OCI-LY7 (cell line): ENCODE measurements at regions of chr1 and their contacts with region 1.

Region 1: DNA sequence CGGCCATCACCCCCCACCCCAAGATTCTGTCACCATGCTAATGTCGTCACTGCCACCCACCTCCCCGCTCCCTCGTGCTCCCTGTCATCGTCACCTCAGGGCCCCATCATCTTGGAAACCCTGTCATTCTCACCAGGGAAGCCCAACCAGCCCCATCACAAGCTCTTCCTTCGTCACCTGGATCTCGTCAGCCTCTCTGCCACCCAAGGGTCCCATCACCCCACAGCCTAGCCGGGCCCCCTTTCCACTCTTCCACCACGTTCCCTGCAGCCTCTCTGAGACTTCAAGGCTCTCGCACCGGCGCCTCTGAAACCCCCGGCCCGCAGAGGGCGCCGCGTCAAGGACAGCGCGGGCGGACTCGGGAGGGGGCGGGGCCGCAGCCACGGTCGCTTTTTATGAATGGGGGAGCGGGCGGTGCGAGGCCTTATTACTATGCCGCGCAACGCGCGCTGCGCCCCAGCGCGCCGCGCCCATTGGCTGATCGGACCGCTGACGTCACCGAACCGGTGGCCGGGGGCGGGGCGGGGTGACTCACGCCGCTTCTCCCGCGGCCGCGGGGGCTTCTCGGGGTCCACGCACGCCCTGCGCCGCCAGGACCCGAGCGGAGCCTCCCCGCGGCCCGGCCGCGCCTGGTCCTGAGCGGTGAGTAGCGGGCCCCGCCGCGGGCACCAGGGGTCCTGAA is at the start of gene GPR3:
- DNase-seq: peak; percentile 96
- H3K4me3 ChIP-seq: peak within 1 kb of the TSS; percentile 75
- H3K27ac ChIP-seq: no peak within 1 kb of the TSS
- H3K4me1 ChIP-seq: peaks cover 13% of the 10 kb centered on the region
- CTCF ChIP-seq: peak; percentile 74
- total RNA-seq, gene GPR3: 0.21 and 0.32 TPM in 2 replicates

Region 2: DNA sequence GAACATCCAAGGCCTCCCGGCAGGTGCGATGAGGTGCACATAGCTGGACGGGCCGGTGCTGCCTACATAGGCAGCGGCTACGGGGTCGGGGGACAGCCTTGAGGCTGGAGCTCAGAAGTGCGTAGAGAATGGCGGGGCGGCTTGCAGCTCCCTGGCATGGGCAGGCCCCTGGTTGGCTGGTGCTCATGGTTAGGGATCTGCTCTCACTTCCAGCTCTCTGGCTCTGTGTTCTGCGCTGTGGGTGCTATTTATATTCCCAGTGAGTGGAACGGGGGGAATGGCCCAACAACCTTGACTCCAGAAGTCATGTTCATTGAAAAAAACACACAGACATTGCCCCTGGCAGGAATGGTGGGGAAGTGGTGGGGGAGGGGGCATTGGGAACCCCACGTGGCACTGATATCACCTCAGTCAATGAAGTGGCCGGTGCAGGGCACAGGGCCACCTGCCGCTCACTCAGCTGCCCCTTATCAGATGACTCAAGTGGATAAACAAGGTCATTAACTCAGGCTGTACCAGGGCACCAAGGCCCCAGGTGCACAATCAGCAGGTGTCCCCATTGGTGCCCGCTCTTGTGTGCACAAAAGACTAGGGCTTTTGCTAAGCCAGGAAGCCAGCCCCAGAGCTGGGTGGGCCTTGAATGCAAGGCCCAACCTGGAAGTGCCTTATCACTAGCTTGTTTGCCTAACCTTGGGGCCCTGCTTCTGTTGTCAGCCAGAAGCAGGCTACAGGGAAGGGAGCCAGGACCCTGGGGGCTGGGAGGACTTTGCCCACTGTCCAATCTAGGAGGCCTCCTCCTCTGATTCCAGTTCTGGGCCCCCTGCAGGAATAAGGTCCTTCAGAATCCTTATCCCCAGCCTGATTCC is 478.2 kb before region 1 on chr1 and contains the start of gene NR0B2:
- CTCF ChIA-PET with region 1: no interaction called
- POLR2A ChIA-PET with region 1: no interaction called
- intact Hi-C with region 1: no loop called
- DNase-seq: peak; percentile 47
- H3K4me3 ChIP-seq: no peak within 1 kb of the TSS
- H3K27ac ChIP-seq: no peak within 1 kb of the TSS
- H3K4me1 ChIP-seq: peaks cover 7% of the 10 kb centered on the region
- CTCF ChIP-seq: no peak
- total RNA-seq, gene NR0B2: not detected in 2 replicates

Region 3: DNA sequence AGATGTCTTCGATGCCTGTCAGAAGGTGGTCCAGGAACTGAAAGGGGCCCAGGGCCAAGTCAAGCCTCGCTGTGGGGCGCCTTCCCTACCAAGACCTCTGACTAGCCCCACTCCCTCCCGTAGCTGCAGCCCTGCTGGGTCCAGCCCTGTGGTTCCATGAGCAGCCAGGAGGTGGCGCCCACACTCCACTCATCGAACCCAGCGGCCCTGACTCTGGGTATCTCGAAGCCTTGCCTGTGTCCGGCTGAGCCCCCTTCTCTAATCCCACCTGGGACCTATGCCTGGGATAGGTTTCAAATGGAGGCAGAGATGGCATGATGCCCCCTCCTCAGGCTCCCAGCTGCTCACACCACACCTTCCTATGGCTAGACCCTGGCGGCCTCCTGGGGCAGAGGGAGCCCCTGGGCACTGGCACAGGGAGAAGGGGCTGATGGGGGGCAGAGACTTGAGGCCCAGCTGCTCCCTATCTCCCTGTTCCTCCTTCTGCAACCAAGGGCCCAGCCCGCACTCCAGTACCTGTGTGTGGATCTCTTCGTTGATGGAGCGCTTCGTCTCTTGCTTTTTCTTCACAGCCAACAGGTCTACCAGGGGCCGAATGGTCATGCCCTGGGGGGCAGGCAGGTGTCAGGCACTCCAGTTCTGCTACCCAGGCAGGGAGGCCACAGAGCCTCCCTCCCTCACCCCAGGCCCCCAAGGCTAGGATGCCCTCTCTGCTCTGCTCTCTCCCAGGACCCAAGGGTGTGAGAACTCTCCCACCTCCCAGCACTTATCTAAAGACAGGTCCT is 289.3 kb before region 1 on chr1:
- CTCF ChIA-PET with region 1: no interaction called
- POLR2A ChIA-PET with region 1: no interaction called
- intact Hi-C with region 1: loop called (anchors 5 kb)
- DNase-seq: peak; percentile 70
- H3K4me3 ChIP-seq: no peak overlapping the region
- H3K27ac ChIP-seq: no peak overlapping the region
- H3K4me1 ChIP-seq: peaks cover 24% of the 10 kb centered on the region
- CTCF ChIP-seq: peak; percentile 92

Region 4: GRCh38 chr1:27300341-27301051 is 91.7 kb before region 1 on chr1:
- CTCF ChIA-PET with region 1: no interaction called
- POLR2A ChIA-PET with region 1: no interaction called
- intact Hi-C with region 1: loop called (anchors 1 kb)
- DNase-seq: peak; percentile 80
- H3K4me3 ChIP-seq: no peak overlapping the region
- H3K27ac ChIP-seq: no peak overlapping the region
- H3K4me1 ChIP-seq: peaks cover 9% of the 10 kb centered on the region
- CTCF ChIP-seq: peak; percentile 90

Region 5: DNA sequence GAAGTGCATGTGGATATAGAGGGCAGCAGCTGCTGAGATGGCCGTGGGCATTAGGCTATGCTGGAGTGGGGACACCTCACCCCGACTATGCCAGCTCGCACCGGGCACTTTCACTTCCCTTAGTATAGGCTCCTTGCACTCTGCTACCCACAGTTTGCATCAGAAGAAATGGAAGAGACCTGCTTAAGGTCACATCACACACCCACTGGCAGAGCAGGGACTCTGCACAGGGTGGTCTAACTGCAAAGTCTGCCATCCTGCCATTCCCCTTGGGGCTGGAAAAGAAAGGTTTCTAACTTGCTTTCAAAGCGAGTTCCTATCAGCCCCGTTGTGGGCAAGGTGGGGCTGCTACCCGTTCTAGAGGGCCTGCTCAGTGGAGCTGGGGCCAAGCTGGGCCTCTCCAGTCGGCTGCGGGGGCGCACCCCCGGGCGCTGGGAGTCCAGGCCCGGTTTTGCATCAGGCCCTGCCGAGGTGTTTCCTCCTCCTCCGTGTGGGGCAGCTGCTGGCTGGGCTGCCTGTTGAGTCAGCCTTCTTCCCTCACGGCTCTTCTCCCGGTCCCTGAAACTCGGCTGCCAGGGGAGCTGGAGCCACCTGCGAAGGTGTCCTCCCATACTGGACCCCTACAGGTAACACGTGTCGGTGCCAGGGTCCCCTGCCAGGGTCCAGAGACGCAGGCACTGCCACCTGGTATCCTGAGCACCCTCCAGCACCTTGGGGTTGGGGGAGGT is 50.5 kb before region 1 on chr1 and contains the start of gene SYTL1:
- CTCF ChIA-PET with region 1: no interaction called
- POLR2A ChIA-PET with region 1: no interaction called
- intact Hi-C with region 1: loop called (anchors 5 kb)
- DNase-seq: peak; percentile 90
- H3K4me3 ChIP-seq: peak within 1 kb of the TSS; percentile 81
- H3K27ac ChIP-seq: peak within 1 kb of the TSS; percentile 70
- H3K4me1 ChIP-seq: peaks cover 44% of the 10 kb centered on the region
- CTCF ChIP-seq: no peak; the same call in 1 of the 2 replicates
- total RNA-seq, gene SYTL1: 67.9 and 117 TPM in 2 replicates

Region 6: DNA sequence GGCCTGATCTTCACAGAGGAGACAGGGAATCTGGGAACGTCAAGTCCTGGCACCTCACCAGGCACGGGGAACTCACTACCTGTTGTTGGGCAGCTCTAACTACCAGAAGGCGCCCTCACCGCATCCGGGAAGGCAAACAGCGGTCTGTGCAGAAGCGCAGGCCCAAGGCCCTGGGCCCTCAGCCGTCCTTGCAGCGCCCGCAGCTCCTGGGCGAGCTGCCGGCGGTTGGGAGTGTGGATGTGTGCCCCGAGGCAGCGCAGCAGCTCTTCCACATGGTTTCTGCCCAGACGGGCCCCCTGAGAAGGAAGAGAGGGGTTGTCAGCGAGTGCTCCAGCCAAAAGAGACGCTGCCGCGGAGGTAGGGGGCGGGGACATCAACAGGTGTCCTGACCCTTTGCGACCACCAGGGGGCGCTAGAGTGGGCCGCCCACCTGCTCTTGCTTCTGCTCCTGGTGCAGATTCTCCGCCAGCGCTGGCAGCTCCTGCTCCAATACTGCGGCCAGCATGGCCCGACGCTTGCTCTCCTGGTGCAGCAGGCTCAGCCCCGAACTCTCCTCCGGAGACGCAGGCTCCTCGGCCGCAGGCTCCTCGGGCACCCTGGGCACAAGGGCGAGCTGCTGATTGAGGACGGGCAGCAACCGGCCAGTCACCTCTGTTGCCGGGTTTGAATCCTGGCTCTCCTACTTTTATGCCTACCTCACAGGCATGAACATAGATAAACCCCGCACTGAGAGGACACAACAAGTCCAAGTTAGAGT is 34.8 kb before region 1 on chr1:
- CTCF ChIA-PET with region 1: no interaction called
- POLR2A ChIA-PET with region 1: no interaction called
- intact Hi-C with region 1: loop called (anchors 1 kb)
- DNase-seq: peak; percentile 77
- H3K4me3 ChIP-seq: peak overlapping the region; percentile 65
- H3K27ac ChIP-seq: peak overlapping the region; percentile 25
- H3K4me1 ChIP-seq: peaks cover 26% of the 10 kb centered on the region
- CTCF ChIP-seq: peak; percentile 87

Region 7: GRCh38 chr1:27365372-27366112 is 26.7 kb before region 1 on chr1:
- CTCF ChIA-PET with region 1: interaction called, 22 read pairs
- POLR2A ChIA-PET with region 1: no interaction called
- intact Hi-C with region 1: no loop called
- DNase-seq: peak; percentile 87
- H3K4me3 ChIP-seq: peak overlapping the region; percentile 62
- H3K27ac ChIP-seq: peak overlapping the region; percentile 5
- H3K4me1 ChIP-seq: peaks cover 22% of the 10 kb centered on the region
- CTCF ChIP-seq: no peak

Region 8: GRCh38 chr1:27662707-27663393 is 270.6 kb after region 1 on chr1:
- CTCF ChIA-PET with region 1: interaction called, 6 read pairs
- POLR2A ChIA-PET with region 1: no interaction called
- intact Hi-C with region 1: loop called (anchors 1 kb)
- DNase-seq: peak; percentile 92
- H3K4me3 ChIP-seq: peak overlapping the region; percentile 54
- H3K27ac ChIP-seq: peak overlapping the region; percentile 85
- H3K4me1 ChIP-seq: peaks cover 54% of the 10 kb centered on the region
- CTCF ChIP-seq: peak; percentile 94

Region 9: GRCh38 chr1:27704958-27705357 is 312.7 kb after region 1 on chr1:
- CTCF ChIA-PET with region 1: no interaction called
- POLR2A ChIA-PET with region 1: no interaction called
- intact Hi-C with region 1: no loop called
- DNase-seq: no peak
- H3K4me3 ChIP-seq: no peak overlapping the region
- H3K27ac ChIP-seq: no peak overlapping the region
- H3K4me1 ChIP-seq: no peaks in the 10 kb centered on the region
- CTCF ChIP-seq: no peak